ENCODE measurements at regions of chr15 and their contacts with region 1.

Region 1: DNA sequence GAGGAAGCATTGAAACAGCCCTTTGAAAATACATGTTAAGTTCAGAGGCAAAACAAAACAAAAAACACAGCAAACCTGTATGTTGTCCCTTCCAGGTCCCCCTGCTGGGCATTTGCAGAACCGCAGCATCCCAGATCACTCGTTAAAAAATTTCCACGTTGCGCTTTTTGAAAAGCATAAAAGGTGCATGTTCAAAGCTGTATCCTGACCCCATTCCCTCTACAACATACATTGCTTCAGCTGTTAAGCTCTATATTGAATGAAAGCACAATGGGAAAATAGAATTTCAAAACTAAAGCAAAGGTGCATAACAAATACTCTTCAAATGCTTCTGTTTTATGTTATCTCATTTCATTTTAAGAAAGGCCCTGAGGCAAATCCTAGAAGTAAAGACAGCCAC is 328.3 kb downstream of the THSD4 start:
- DNase-seq: peak; percentile 73
- ATAC-seq: no peak
- H3K4me3 ChIP-seq: no peak overlapping the region
- H3K27ac ChIP-seq: peak overlapping the region; percentile 99
- H3K4me1 ChIP-seq: peaks cover 75% of the 10 kb centered on the region
- H3K27me3 ChIP-seq: no peaks in the 10 kb centered on the region
- CTCF ChIP-seq: peak; percentile 87

Region 2: GRCh38 chr15:70892002-70892914 is 551.3 kb before region 1 on chr15 and contains the starts of genes LRRC49 and THAP10:
- CTCF ChIA-PET with region 1: no interaction called
- POLR2A ChIA-PET with region 1: no interaction called
- intact Hi-C with region 1: loop called (anchors 5 kb)
- DNase-seq: peak; percentile 96
- ATAC-seq: peak; percentile 96
- H3K4me3 ChIP-seq: peak within 1 kb of the TSS; percentile 80
- H3K27ac ChIP-seq: peak within 1 kb of the TSS; percentile 70
- H3K4me1 ChIP-seq: peaks cover 19% of the 10 kb centered on the region
- H3K27me3 ChIP-seq: no peaks in the 10 kb centered on the region
- CTCF ChIP-seq: no peak
- total RNA-seq, gene LRRC49: 7.7 and 13.6 TPM in 2 replicates
- total RNA-seq, gene THAP10: 5.9 and 7.2 TPM in 2 replicates

Region 3: DNA sequence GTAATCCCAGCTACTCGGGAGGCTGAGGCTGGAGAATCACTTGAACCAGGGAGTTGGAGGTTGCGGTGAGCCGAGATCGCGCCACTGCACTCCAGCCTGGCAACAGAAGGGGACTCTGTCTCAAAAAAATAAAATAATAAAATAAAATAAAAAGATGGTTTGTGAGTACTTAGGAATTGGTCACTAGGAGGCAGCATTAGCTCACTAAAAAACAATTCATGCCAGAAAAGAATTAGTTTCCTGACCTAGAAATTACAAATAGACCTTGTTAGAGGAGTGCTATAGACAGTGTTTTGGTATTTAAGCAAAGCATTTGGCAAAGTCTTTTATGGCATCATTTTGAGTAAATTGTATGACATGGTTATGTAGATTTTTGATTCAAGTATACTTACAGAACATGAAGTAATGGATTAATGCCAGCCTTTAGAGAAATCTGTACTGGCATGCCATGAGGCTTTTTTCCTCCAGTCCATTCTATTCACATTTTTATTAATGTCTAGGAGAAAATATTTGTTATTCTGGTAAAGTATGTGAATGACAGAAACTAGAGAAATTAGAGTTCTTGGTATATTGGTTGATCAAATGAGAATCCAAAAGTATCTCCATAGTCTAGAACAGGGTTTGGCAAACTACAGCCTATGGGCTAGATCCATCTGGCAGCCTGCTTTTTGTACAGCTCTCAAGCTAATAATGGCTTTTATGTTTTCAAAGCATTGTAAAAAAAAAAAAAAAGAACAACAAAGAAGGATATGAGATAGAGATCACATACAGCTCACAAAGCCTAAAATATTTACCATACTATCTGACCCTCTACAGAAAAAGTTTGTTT is 469.3 kb before region 1 on chr15:
- CTCF ChIA-PET with region 1: interaction called, 3 read pairs
- POLR2A ChIA-PET with region 1: no interaction called
- intact Hi-C with region 1: loop called (anchors 5 kb)
- DNase-seq: peak; percentile 72
- ATAC-seq: no peak; the same call in 1 of the 2 replicates
- H3K4me3 ChIP-seq: no peak overlapping the region
- H3K27ac ChIP-seq: no peak overlapping the region
- H3K4me1 ChIP-seq: peaks cover 7% of the 10 kb centered on the region; the same call in 1 of the 2 replicates
- H3K27me3 ChIP-seq: no peaks in the 10 kb centered on the region
- CTCF ChIP-seq: peak; percentile 49; the same call in 1 of the 2 replicates

Region 4: GRCh38 chr15:71011503-71012155 is 431.9 kb before region 1 on chr15:
- CTCF ChIA-PET with region 1: no interaction called
- POLR2A ChIA-PET with region 1: no interaction called
- intact Hi-C with region 1: loop called (anchors 2 kb)
- DNase-seq: peak; percentile 82
- ATAC-seq: peak; percentile 87
- H3K4me3 ChIP-seq: no peak overlapping the region
- H3K27ac ChIP-seq: peak overlapping the region; percentile 34
- H3K4me1 ChIP-seq: peaks cover 15% of the 10 kb centered on the region
- H3K27me3 ChIP-seq: no peaks in the 10 kb centered on the region
- CTCF ChIP-seq: peak; percentile 93

Region 5: DNA sequence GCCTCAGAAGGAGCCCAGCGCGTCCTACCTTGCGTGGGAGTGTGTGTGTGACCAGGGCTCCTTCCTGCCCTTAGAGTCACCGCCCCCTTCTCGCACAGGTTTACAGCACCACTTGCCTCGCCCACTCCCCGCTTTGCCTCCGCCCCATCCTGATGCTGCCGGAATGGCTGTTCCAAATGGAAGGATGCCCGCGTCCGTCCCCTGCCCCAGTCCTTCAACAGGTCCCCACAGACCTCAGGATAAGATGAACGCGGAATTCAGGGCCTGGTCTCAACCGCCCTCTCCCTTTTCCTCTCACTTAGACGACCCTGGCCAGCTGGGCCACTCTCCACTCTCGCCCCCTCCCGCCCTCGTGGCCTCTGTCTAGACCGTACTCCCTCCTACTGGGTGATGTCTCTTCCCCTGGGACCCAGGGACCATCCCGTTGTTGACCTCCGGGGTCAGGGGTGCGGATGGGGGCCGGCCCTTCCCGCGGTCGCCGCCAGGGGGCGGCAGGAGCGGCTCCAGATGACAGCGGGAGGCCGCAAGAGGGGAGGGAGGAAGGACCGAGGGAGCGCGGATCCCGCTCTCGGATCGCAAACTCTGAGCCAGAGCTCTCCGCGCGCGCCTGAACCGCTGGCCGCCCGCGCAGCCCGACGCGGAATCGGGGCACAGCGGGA is 328.5 kb before region 1 on chr15 and contains the start of gene THSD4:
- CTCF ChIA-PET with region 1: no interaction called
- POLR2A ChIA-PET with region 1: interaction called, 3 read pairs
- intact Hi-C with region 1: loop called (anchors 1 kb)
- DNase-seq: peak; percentile 89
- ATAC-seq: peak; percentile 69
- H3K4me3 ChIP-seq: peak within 1 kb of the TSS; percentile 81
- H3K27ac ChIP-seq: peak within 1 kb of the TSS; percentile 98
- H3K4me1 ChIP-seq: peaks cover 68% of the 10 kb centered on the region
- H3K27me3 ChIP-seq: no peaks in the 10 kb centered on the region
- CTCF ChIP-seq: peak; percentile 92
- total RNA-seq, gene THSD4: 29.0 and 39.3 TPM in 2 replicates

Region 6: DNA sequence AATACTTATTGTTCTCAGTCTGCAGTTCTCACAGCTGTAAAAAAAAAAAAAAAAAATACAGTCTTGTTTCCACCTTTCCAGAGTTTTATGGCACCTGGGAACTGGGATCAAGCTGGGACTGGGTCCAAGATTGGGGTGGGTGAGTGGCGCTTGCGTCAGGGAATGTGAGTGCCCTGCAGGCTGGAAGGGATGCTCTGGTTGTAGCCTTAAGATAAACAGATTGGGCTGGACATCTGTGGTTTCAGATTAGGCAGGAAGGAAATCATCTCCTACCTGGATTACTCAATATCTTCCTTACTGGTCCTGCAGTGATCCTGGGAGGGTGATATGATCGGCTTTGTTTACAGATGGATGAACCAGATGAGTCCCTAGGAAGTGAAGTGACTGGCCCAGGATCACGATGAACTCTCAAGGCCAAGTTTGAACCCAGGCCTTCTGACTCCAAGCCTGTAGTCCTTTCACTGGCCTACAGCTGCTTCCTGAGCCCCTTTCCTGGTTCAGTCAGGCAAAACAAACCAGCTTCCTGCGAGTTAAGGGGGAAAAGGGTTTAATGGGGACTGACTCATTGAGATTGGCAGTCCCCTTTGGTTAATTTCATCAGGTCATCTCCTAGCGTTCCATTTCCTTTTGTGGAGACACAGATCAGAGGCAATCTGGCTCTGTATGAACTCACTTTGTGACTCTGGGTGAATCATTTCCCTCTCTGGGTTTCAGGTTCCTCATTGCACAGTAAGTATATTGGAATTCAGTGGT is 148.5 kb before region 1 on chr15:
- CTCF ChIA-PET with region 1: interaction called, 3 read pairs
- POLR2A ChIA-PET with region 1: no interaction called
- intact Hi-C with region 1: loop called (anchors 2 kb)
- DNase-seq: peak; percentile 98
- ATAC-seq: peak; percentile 71
- H3K4me3 ChIP-seq: no peak overlapping the region
- H3K27ac ChIP-seq: peak overlapping the region; percentile 100
- H3K4me1 ChIP-seq: peaks cover 79% of the 10 kb centered on the region
- H3K27me3 ChIP-seq: no peaks in the 10 kb centered on the region
- CTCF ChIP-seq: no peak

Region 7: GRCh38 chr15:71313806-71314205 is 129.7 kb before region 1 on chr15:
- CTCF ChIA-PET with region 1: no interaction called
- POLR2A ChIA-PET with region 1: no interaction called
- intact Hi-C with region 1: no loop called
- DNase-seq: no peak
- ATAC-seq: no peak
- H3K4me3 ChIP-seq: no peak overlapping the region
- H3K27ac ChIP-seq: no peak overlapping the region
- H3K4me1 ChIP-seq: no peaks in the 10 kb centered on the region
- H3K27me3 ChIP-seq: no peaks in the 10 kb centered on the region
- CTCF ChIP-seq: no peak

Region 8: DNA sequence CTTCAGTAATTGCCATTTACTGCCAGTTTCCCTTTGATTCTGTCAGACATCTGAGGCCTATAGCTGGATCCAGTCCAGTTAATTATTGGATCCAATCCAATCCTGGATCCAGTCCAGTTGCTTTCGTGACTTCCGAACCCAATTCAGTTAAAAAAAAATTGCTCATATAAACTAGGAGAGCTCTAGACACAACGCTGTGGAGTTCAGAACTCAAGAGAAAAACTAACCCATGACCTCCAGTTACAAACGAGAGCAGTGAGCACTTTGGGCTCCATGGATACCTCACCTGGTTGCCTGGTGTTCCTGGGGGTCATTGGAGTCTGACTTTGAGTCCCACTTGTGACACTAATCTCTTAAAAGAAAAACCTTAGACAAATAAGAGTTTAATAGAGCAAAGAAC is 58.5 kb before region 1 on chr15:
- CTCF ChIA-PET with region 1: interaction called, 8 read pairs
- POLR2A ChIA-PET with region 1: no interaction called
- intact Hi-C with region 1: loop called (anchors 2 kb)
- DNase-seq: no peak
- ATAC-seq: no peak
- H3K4me3 ChIP-seq: no peak overlapping the region
- H3K27ac ChIP-seq: peak overlapping the region; percentile 12; the same call in 1 of the 2 replicates
- H3K4me1 ChIP-seq: peaks cover 8% of the 10 kb centered on the region; the same call in 1 of the 2 replicates
- H3K27me3 ChIP-seq: no peaks in the 10 kb centered on the region
- CTCF ChIP-seq: no peak

Region 9: GRCh38 chr15:71485099-71485693 is 41.7 kb after region 1 on chr15:
- CTCF ChIA-PET with region 1: no interaction called
- POLR2A ChIA-PET with region 1: no interaction called
- intact Hi-C with region 1: no loop called
- DNase-seq: peak; percentile 23
- ATAC-seq: no peak
- H3K4me3 ChIP-seq: no peak overlapping the region
- H3K27ac ChIP-seq: no peak overlapping the region
- H3K4me1 ChIP-seq: no peaks in the 10 kb centered on the region
- H3K27me3 ChIP-seq: no peaks in the 10 kb centered on the region
- CTCF ChIP-seq: peak; percentile 69

Measured in PC-3 (cell line).